Activated CD4-positive, alpha-beta T cell treated with anti-CD3 and anti-CD28 coated beads, Interleukin-2, amount 10 ng/mL, durations not matched to agents 24 days and 14 days (primary cell): ENCODE measurements at regions of chr1 and their contacts with region 1.

Region 1: GRCh38 chr1:87084244-87084836 is 169.9 kb downstream of the HS2ST1 start:
- DNase-seq: no peak
- H3K4me3 Mint-ChIP-seq: no peak overlapping the region
- H3K27ac Mint-ChIP-seq: no peak overlapping the region
- H3K4me1 Mint-ChIP-seq: peaks cover 4% of the 10 kb centered on the region
- H3K27me3 Mint-ChIP-seq: no peaks in the 10 kb centered on the region

Region 2: GRCh38 chr1:86833461-86834215 is 250.7 kb before region 1 on chr1:
- intact Hi-C with region 1: loop called (anchors 1 kb)
- DNase-seq: peak; percentile 85
- H3K4me3 Mint-ChIP-seq: no peak overlapping the region
- H3K27ac Mint-ChIP-seq: no peak overlapping the region
- H3K4me1 Mint-ChIP-seq: peaks cover 4% of the 10 kb centered on the region
- H3K27me3 Mint-ChIP-seq: peaks cover 6% of the 10 kb centered on the region

Region 3: DNA sequence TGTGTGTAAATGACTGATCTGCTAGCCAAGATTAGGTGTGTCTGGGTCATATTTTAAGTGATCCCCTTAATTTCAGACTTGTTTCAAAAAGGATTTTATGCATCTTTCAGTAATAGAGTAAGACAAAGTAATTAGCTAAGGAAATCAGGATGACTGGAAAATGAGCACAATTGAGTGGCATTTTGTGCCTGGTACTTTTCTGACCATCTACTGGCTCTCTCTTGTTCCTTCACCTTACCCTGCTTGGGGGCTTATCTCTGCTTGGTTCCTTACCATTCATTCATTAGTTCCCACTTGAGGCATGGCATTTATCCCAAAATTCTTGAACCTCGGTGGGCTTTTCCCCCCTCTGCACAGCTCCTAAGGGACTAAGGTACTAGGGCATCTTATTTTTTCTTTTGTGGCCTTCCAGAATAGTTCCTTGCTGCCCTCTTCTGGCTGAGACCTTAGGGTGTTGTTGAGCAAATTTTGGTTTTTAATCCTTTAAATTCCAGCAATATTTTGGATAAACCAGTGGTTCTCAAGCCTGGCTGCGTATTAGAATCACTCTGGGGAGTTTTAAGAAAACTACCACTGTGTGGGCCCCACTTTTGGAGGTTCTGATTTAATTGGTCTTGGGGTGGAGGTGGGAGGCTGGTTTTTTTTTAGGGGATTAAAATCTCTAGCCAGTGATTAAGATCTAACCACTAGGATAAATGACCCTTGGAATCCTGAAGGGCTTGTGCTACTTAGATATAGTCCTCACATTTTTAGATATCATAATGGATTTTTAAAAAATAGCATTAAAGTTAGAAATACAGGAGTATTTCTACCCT is 119.1 kb before region 1 on chr1:
- intact Hi-C with region 1: loop called (anchors 10 kb)
- DNase-seq: peak; percentile 70
- H3K4me3 Mint-ChIP-seq: no peak overlapping the region
- H3K27ac Mint-ChIP-seq: no peak overlapping the region
- H3K4me1 Mint-ChIP-seq: no peaks in the 10 kb centered on the region
- H3K27me3 Mint-ChIP-seq: no peaks in the 10 kb centered on the region